K562 (cell line): ENCODE measurements at regions of chr7 and their contacts with region 1.

Region 1: GRCh38 chr7:19982841-19983835 is 209.7 kb upstream of the TMEM196 start:
- DNase-seq: peak in 1 of 4 experiments; percentile 36
- ATAC-seq: no peak; the same call in 2 of the 3 replicates
- H3K4me3 ChIP-seq: no peak overlapping the region
- H3K27ac ChIP-seq: no peak overlapping the region
- H3K4me1 ChIP-seq: no peaks in the 10 kb centered on the region
- H3K27me3 ChIP-seq: no peaks in the 10 kb centered on the region
- CTCF ChIP-seq: peak in 2 of 3 experiments; percentile 22 to 29; a peak in 2 of 6 replicates
- EP300 ChIP-seq: no peak
- POLR2A ChIP-seq: no peak
- RAD21 ChIP-seq: peak; percentile 45 to 70

Region 2: GRCh38 chr7:20343205-20343604 is 360.1 kb after region 1 on chr7:
- CTCF ChIA-PET with region 1: no interaction called
- POLR2A ChIA-PET with region 1: no interaction called
- in situ Hi-C with region 1: no loop called
- intact Hi-C with region 1: loop called (anchors 10 kb)
- DNase-seq: peak in 1 of 4 experiments; percentile 7
- ATAC-seq: peak; percentile 61; the same call in 2 of the 3 replicates
- H3K4me3 ChIP-seq: no peak overlapping the region
- H3K27ac ChIP-seq: no peak overlapping the region
- H3K4me1 ChIP-seq: no peaks in the 10 kb centered on the region
- H3K27me3 ChIP-seq: peaks cover 0 to 3% of the 10 kb centered on the region in 2 experiments; a peak in 1 of 5 replicates
- CTCF ChIP-seq: peak; percentile 21 to 49 (median 43); a peak in 4 of 6 replicates
- EP300 ChIP-seq: no peak
- POLR2A ChIP-seq: no peak
- RAD21 ChIP-seq: peak; percentile 42 to 64